GM12878 (cell line): ENCODE measurements at regions of chr21 and their contacts with region 1.

Region 1: DNA sequence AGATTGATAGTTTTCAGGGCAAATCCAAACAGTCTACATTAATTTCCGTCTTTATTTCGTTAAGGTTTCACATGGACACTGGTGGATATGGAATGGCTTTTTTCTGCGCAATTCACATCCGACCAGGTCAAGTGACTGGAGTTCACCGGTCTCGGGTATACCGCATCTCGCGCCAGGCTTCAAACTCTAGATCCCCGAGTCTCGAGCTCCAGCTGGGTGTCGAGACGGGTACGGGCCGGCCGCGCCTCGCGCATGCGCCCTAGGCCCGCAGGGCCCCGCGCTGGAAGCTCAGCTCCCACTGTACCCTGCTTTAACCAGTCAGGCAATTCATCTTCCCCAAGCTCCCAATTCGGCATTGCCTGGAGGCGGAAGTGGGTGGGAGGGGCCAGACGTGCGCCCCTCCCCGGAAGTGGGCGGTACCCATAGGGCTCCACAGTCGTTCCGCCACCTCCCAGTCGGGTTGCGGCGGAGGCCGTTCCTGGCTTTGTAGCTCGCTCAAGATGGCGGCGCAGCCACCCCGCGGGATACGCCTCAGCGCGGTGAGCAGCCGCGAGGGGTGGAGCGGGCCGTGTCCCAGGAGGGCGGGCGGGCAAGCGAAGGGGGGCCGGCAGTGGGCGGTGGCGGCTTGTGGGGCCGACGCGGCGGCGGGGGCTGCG is at the start of gene MORC3:
- DNase-seq: peak; percentile 98
- ATAC-seq: peak; percentile 92
- H3K4me3 ChIP-seq: peak within 1 kb of the TSS; percentile 81
- H3K27ac ChIP-seq: peak within 1 kb of the TSS; percentile 81
- H3K4me1 ChIP-seq: peaks cover 9% of the 10 kb centered on the region
- H3K27me3 ChIP-seq: no peaks in the 10 kb centered on the region; a peak in 1 of 4 replicates
- CTCF ChIP-seq: no peak
- EP300 ChIP-seq: 0 out of 4 replicates have a peak, but pooled peaks of 1 of the 2 experiments have one; percentile 16
- POLR2A ChIP-seq: peak; percentile 98
- RAD21 ChIP-seq: 0 out of 2 replicates have a peak, but pooled peaks have one; percentile 0
- polyA plus RNA-seq, gene MORC3: 5.5 to 7.1 TPM

Region 2: DNA sequence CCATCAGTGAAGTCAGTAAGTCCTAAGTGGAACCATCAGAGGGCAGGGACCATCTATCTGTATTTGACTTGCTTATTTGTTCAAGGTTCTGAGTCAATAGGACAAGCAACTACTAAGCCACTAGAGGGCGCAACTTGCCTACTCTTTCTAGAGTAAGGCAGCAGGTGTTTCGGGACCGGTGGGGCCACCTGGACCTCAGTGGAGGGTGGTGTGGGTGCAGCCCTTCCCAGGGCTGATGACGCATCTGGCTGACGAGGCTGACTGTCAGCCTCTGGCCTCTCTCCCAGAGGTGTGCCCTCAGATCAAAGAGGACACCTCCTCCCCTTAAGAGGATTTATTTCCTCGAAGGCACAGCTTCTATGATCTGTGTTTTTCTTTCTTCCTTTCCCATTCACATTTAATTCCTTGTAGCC is 178.4 kb before region 1 on chr21:
- CTCF ChIA-PET with region 1: interaction called, 10 read pairs
- POLR2A ChIA-PET with region 1: interaction called, 3 read pairs
- RAD21 ChIA-PET with region 1: interaction called, 6 read pairs
- SMC1A ChIA-PET with region 1: interaction called, 3 read pairs
- in situ Hi-C with region 1: no loop called
- intact Hi-C with region 1: no loop called
- DNase-seq: peak; percentile 53
- ATAC-seq: peak; percentile 98
- H3K4me3 ChIP-seq: no peak overlapping the region
- H3K27ac ChIP-seq: no peak overlapping the region
- H3K4me1 ChIP-seq: peaks cover 1% of the 10 kb centered on the region; the same call in 1 of the 2 replicates
- H3K27me3 ChIP-seq: peaks cover 0 to 1% of the 10 kb centered on the region in 2 experiments; a peak in 1 of 4 replicates
- CTCF ChIP-seq: peak; percentile 74 to 93 (median 85)
- EP300 ChIP-seq: no peak
- POLR2A ChIP-seq: no peak
- RAD21 ChIP-seq: peak; percentile 96

Region 3: DNA sequence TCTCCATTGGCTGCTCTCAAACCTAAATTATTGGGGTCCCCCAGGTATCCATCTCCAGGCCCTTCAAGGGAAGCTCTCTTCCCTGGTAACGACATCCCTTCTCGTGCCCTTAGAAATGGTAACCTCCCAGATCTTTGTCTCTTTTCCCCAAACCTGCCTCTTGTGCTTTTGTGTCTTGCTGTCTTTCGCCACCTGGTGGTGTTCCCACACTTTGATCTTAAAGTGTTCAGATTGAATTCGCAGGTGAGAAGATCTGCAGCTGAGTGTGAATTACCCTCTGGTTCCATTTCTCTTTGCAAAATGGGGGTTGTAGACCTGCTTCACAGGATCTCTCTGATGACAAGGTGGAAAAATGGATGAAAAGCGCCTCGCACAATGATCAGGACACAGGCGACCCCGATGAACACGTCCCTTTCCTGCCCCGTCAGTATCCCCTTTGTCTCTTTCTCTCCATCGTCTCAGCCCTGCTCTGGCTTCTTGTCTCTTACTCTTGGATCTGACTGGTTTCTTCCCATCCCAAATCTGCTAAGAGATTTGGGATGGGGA is 110.2 kb before region 1 on chr21:
- CTCF ChIA-PET with region 1: interaction called, 27 read pairs
- POLR2A ChIA-PET with region 1: no interaction called
- RAD21 ChIA-PET with region 1: interaction called, 8 read pairs
- SMC1A ChIA-PET with region 1: interaction called, 12 read pairs
- in situ Hi-C with region 1: no loop called
- intact Hi-C with region 1: no loop called
- DNase-seq: no peak
- ATAC-seq: peak; percentile 78
- H3K4me3 ChIP-seq: no peak overlapping the region
- H3K27ac ChIP-seq: no peak overlapping the region
- H3K4me1 ChIP-seq: no peaks in the 10 kb centered on the region
- H3K27me3 ChIP-seq: no peaks in the 10 kb centered on the region
- CTCF ChIP-seq: peak; percentile 56 to 64 (median 62)
- EP300 ChIP-seq: no peak
- POLR2A ChIP-seq: no peak
- RAD21 ChIP-seq: peak; percentile 87

Region 4: DNA sequence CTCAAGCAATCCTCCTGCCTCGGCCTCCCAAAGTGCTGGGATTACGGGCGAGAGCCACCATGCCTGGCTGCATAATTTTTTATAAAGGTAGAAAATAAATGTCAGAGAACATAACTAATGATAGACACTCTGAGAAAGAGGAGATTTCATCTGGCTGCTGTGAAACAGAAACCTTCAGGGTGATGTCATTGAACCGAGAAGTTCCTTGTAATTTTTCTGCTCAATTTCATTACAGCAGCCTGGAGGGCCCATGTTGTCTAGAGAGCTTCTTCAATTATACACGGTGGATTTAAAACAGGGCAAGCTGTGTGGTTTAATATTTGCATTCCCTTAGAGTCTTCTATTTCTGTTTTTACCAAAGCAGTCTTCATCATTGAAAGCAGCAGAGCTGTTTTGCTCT is 64.2 kb before region 1 on chr21:
- CTCF ChIA-PET with region 1: interaction called, 5 read pairs
- POLR2A ChIA-PET with region 1: interaction called, 22 read pairs
- RAD21 ChIA-PET with region 1: interaction called, 8 read pairs
- SMC1A ChIA-PET with region 1: interaction called, 50 read pairs
- in situ Hi-C with region 1: no loop called
- intact Hi-C with region 1: loop called (anchors 2 kb)
- DNase-seq: peak; percentile 63
- ATAC-seq: peak; percentile 85
- H3K4me3 ChIP-seq: peak overlapping the region; percentile 45; the same call in 1 of the 2 replicates
- H3K27ac ChIP-seq: peak overlapping the region; percentile 63
- H3K4me1 ChIP-seq: peaks cover 24% of the 10 kb centered on the region
- H3K27me3 ChIP-seq: no peaks in the 10 kb centered on the region
- CTCF ChIP-seq: no peak
- EP300 ChIP-seq: no peak
- POLR2A ChIP-seq: no peak
- RAD21 ChIP-seq: peak; percentile 9; the same call in 1 of the 2 replicates

Region 5: GRCh38 chr21:36297921-36298594 is 21.8 kb before region 1 on chr21:
- CTCF ChIA-PET with region 1: interaction called, 6 read pairs
- POLR2A ChIA-PET with region 1: interaction called, 56 read pairs
- RAD21 ChIA-PET with region 1: interaction called, 80 read pairs
- SMC1A ChIA-PET with region 1: interaction called, 28 read pairs
- in situ Hi-C with region 1: no loop called
- intact Hi-C with region 1: no loop called
- DNase-seq: peak; percentile 85
- ATAC-seq: peak; percentile 99
- H3K4me3 ChIP-seq: peak overlapping the region; percentile 33; the same call in 1 of the 2 replicates
- H3K27ac ChIP-seq: peak overlapping the region; percentile 94
- H3K4me1 ChIP-seq: peaks cover 32% of the 10 kb centered on the region
- H3K27me3 ChIP-seq: no peaks in the 10 kb centered on the region
- CTCF ChIP-seq: no peak
- EP300 ChIP-seq: no peak
- POLR2A ChIP-seq: peak; percentile 69
- RAD21 ChIP-seq: no peak; the same call in 1 of the 2 replicates

Region 6: DNA sequence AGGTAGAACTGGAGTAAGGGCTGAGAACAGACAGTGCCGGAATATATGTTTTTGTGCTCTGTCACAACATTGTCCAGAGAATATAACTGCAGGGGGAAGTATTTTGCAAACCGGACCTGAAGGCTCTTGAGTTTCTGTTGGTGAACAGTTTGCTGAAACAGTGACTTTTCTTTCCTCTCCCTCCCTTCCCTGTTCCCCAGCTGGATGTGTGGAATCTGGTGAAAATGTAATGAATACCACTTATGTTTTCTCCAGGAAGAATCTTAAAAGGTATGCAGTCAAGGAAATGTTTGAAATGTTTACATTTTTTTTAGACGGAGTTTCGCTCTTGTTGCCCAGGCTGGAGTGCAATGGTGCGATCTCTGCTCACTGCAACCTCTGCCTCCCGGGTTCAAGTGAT is 88.7 kb after region 1 on chr21:
- CTCF ChIA-PET with region 1: no interaction called
- POLR2A ChIA-PET with region 1: no interaction called
- RAD21 ChIA-PET with region 1: no interaction called
- SMC1A ChIA-PET with region 1: no interaction called
- in situ Hi-C with region 1: no loop called
- intact Hi-C with region 1: no loop called
- DNase-seq: no peak
- ATAC-seq: no peak
- H3K4me3 ChIP-seq: no peak overlapping the region
- H3K27ac ChIP-seq: no peak overlapping the region
- H3K4me1 ChIP-seq: no peaks in the 10 kb centered on the region
- H3K27me3 ChIP-seq: no peaks in the 10 kb centered on the region
- CTCF ChIP-seq: no peak
- EP300 ChIP-seq: no peak
- POLR2A ChIP-seq: no peak
- RAD21 ChIP-seq: no peak